HCT116 (cell line): ENCODE measurements at regions of chr5 and their contacts with region 1.

Region 1: DNA sequence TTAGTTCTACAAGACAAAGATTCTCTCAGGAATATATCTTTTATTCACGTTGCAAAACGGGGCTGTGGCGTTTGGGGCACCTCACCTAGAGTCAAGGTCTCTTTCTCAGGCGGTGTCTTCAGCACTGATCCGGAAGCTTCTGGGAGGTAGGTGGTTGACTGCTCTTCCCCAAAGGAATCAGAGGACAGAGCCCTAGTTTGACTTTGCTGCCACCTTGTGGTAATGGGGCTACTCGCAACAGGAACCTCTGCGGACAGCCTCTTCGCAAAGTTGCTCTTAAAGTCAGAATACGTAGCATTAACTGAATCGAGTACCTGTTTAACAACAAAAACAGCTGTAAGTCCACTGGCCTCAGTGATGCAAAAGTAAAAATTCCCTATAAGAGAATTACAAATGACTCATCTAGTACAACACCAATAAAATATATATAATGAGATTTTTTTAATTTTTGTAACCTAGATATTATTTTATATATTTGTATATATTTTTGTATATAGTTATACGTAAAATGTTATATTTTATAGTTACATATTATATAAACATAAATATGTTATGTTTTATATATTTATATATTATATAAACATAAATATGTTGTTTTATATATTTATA is 13.3 kb upstream of the GPX8 start:
- DNase-seq: peak; percentile 82
- ATAC-seq: peak; percentile 99
- H3K4me3 ChIP-seq: no peak overlapping the region
- H3K27ac ChIP-seq: no peak overlapping the region
- H3K4me1 ChIP-seq: peaks cover 0 to 7% of the 10 kb centered on the region in 2 experiments; a peak in 2 of 4 replicates
- H3K27me3 ChIP-seq: peaks cover 18% of the 10 kb centered on the region
- CTCF ChIP-seq: peak; percentile 81 to 95 (median 95)
- POLR2A ChIP-seq: no peak
- RAD21 ChIP-seq: peak; percentile 93

Region 2: DNA sequence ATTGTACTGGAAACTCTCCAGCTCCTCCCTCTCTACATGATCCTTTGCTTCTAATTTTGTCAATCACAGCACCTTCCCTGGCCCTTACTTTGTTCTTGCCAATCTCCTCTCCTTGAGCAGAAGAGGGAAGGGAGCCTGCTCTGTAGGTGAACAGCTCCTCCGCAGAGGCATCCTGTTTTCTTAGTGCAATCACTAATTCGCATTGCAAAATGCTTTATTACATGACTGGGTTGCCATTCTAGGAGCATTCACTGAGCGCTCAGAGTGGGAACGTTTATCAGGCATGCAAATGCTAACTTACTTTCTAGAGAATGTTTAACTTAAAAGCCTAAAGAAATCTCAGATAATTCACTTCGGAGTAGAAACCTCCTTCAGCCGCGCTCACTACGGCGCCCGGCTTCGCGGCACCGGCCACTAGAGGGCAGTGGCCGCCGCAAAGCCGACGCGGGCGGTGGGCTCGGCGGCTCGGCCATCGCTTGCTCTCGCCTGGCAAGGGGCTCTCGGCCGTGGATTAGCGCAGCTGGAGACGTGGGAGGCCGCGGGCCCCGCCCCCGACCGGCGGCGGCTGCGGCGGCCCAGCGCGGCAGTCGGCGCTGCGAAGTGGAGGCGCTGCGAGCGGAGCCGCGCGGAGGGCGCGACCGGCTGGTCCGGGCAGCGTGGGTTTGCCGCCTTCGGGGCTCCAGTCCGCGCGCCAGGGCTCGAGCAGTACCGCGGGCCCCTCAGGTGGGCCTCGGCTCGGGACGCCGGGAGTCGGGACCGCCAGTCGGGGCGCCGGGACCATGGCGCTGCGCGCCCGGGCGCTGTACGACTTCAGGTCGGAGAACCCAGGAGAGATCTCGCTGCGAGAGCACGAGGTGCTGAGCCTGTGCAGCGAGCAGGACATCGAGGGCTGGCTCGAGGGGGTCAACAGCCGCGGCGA is 629.2 kb before region 1 on chr5 and contains the start of gene SNX18:
- CTCF ChIA-PET with region 1: no interaction called
- POLR2A ChIA-PET with region 1: no interaction called
- RAD21 ChIA-PET with region 1: interaction called in 1 of 2 experiments, 3 read pairs
- intact Hi-C with region 1: loop called (anchors 2 kb)
- DNase-seq: peak; percentile 74
- ATAC-seq: peak; percentile 88
- H3K4me3 ChIP-seq: peak within 1 kb of the TSS; percentile 65 to 70
- H3K27ac ChIP-seq: peak within 1 kb of the TSS; percentile 78
- H3K4me1 ChIP-seq: peaks cover 2 to 16% of the 10 kb centered on the region in 2 experiments; a peak in 1 of 4 replicates
- H3K27me3 ChIP-seq: no peaks in the 10 kb centered on the region
- CTCF ChIP-seq: peak; percentile 89 to 95 (median 92)
- POLR2A ChIP-seq: peak; percentile 71
- RAD21 ChIP-seq: peak; percentile 93
- total RNA-seq, gene SNX18: 16.0 TPM

Region 3: GRCh38 chr5:54905943-54906537 is 240.6 kb before region 1 on chr5:
- CTCF ChIA-PET with region 1: interaction called, 62 read pairs
- POLR2A ChIA-PET with region 1: interaction called, 3 read pairs
- RAD21 ChIA-PET with region 1: interaction called, 3 read pairs
- intact Hi-C with region 1: loop called (anchors 1 kb)
- DNase-seq: peak; percentile 44
- ATAC-seq: peak; percentile 62
- H3K4me3 ChIP-seq: no peak overlapping the region
- H3K27ac ChIP-seq: no peak overlapping the region
- H3K4me1 ChIP-seq: no peaks in the 10 kb centered on the region
- H3K27me3 ChIP-seq: peaks cover 69% of the 10 kb centered on the region
- CTCF ChIP-seq: peak; percentile 55 to 79 (median 75)
- POLR2A ChIP-seq: no peak
- RAD21 ChIP-seq: peak; percentile 77

Region 4: GRCh38 chr5:54944364-54944763 is 202.3 kb before region 1 on chr5:
- CTCF ChIA-PET with region 1: interaction called, 17 read pairs
- POLR2A ChIA-PET with region 1: no interaction called
- RAD21 ChIA-PET with region 1: interaction called in 1 of 2 experiments, 3 read pairs
- intact Hi-C with region 1: no loop called
- DNase-seq: peak; percentile 12
- ATAC-seq: peak; percentile 73
- H3K4me3 ChIP-seq: no peak overlapping the region
- H3K27ac ChIP-seq: no peak overlapping the region
- H3K4me1 ChIP-seq: no peaks in the 10 kb centered on the region
- H3K27me3 ChIP-seq: peaks cover 7% of the 10 kb centered on the region; the same call in 1 of the 2 replicates
- CTCF ChIP-seq: peak; percentile 38 to 74 (median 59); a peak in 5 of 6 replicates
- POLR2A ChIP-seq: no peak
- RAD21 ChIP-seq: peak; percentile 46

Region 5: GRCh38 chr5:54959673-54960418 is 186.8 kb before region 1 on chr5:
- CTCF ChIA-PET with region 1: interaction called, 4 read pairs
- POLR2A ChIA-PET with region 1: no interaction called
- RAD21 ChIA-PET with region 1: no interaction called
- intact Hi-C with region 1: loop called (anchors 5 kb)
- DNase-seq: peak; percentile 4
- ATAC-seq: peak; percentile 79
- H3K4me3 ChIP-seq: no peak overlapping the region
- H3K27ac ChIP-seq: no peak overlapping the region
- H3K4me1 ChIP-seq: no peaks in the 10 kb centered on the region
- H3K27me3 ChIP-seq: peaks cover 31% of the 10 kb centered on the region
- CTCF ChIP-seq: peak; percentile 24 to 68 (median 59); a peak in 5 of 6 replicates
- POLR2A ChIP-seq: no peak
- RAD21 ChIP-seq: peak; percentile 47

Region 6: GRCh38 chr5:55102348-55102747 is 44.3 kb before region 1 on chr5 and contains the start of gene GZMA:
- CTCF ChIA-PET with region 1: no interaction called
- POLR2A ChIA-PET with region 1: no interaction called
- RAD21 ChIA-PET with region 1: no interaction called
- intact Hi-C with region 1: no loop called
- DNase-seq: no peak
- ATAC-seq: no peak
- H3K4me3 ChIP-seq: no peak within 1 kb of the TSS
- H3K27ac ChIP-seq: no peak within 1 kb of the TSS
- H3K4me1 ChIP-seq: no peaks in the 10 kb centered on the region
- H3K27me3 ChIP-seq: peaks cover 14% of the 10 kb centered on the region; the same call in 1 of the 2 replicates
- CTCF ChIP-seq: no peak
- POLR2A ChIP-seq: no peak
- RAD21 ChIP-seq: no peak
- total RNA-seq, gene GZMA: not detected

Region 7: DNA sequence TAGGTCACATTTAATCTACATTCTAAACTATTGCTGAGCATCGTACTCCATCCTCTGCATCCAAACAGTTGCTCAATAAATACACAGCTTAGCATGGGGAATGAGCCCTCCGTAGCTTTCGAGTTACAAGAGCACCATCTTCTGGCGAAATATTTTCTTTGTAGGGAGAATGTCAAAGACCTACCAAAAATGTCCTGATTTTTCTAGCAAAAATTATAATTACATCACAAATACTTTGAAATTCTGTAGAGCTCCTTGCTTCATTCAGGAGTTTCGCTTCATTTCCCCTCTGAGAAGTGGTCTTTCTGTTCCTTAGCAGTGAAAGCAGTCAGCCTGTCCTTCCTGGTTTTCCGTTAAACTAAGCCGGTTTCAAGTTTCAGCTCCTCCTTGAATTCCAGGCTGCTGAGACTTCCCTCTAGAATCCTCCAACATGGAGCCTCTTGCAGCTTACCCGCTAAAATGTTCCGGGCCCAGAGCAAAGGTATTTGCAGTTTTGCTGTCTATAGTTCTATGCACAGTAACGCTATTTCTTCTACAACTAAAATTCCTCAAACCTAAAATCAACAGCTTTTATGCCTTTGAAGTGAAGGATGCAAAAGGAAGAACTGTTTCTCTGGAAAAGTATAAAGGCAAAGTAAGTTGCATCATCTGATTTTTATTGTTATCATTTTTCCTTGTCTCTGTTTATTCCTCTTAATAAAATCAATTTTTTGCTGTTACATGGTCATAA is 13.3 kb after region 1 on chr5 and contains the start of gene GPX8:
- CTCF ChIA-PET with region 1: interaction called, 17 read pairs
- POLR2A ChIA-PET with region 1: no interaction called
- RAD21 ChIA-PET with region 1: no interaction called
- intact Hi-C with region 1: no loop called
- DNase-seq: peak; percentile 77
- ATAC-seq: peak; percentile 91
- H3K4me3 ChIP-seq: peak within 1 kb of the TSS; percentile 63 to 77
- H3K27ac ChIP-seq: peak within 1 kb of the TSS; percentile 52
- H3K4me1 ChIP-seq: peaks cover 0 to 19% of the 10 kb centered on the region in 2 experiments; a peak in 2 of 4 replicates
- H3K27me3 ChIP-seq: no peaks in the 10 kb centered on the region
- CTCF ChIP-seq: peak; percentile 44 to 83 (median 81); a peak in 5 of 6 replicates
- POLR2A ChIP-seq: peak; percentile 80
- RAD21 ChIP-seq: peak; percentile 90
- total RNA-seq, gene GPX8: 36.5 TPM

Region 8: GRCh38 chr5:55439008-55439407 is 292.4 kb after region 1 on chr5:
- CTCF ChIA-PET with region 1: no interaction called
- POLR2A ChIA-PET with region 1: no interaction called
- RAD21 ChIA-PET with region 1: no interaction called
- intact Hi-C with region 1: no loop called
- DNase-seq: no peak
- ATAC-seq: peak; percentile 26
- H3K4me3 ChIP-seq: peak overlapping the region in 1 of 2 experiments; percentile 42; a peak in 1 of 4 replicates
- H3K27ac ChIP-seq: peak overlapping the region; percentile 64
- H3K4me1 ChIP-seq: peaks cover 34 to 42% of the 10 kb centered on the region in 2 experiments
- H3K27me3 ChIP-seq: no peaks in the 10 kb centered on the region
- CTCF ChIP-seq: no peak
- POLR2A ChIP-seq: no peak
- RAD21 ChIP-seq: no peak